GM10248 (cell line): ENCODE measurements at regions of chr14 and their contacts with region 1.

Region 1: DNA sequence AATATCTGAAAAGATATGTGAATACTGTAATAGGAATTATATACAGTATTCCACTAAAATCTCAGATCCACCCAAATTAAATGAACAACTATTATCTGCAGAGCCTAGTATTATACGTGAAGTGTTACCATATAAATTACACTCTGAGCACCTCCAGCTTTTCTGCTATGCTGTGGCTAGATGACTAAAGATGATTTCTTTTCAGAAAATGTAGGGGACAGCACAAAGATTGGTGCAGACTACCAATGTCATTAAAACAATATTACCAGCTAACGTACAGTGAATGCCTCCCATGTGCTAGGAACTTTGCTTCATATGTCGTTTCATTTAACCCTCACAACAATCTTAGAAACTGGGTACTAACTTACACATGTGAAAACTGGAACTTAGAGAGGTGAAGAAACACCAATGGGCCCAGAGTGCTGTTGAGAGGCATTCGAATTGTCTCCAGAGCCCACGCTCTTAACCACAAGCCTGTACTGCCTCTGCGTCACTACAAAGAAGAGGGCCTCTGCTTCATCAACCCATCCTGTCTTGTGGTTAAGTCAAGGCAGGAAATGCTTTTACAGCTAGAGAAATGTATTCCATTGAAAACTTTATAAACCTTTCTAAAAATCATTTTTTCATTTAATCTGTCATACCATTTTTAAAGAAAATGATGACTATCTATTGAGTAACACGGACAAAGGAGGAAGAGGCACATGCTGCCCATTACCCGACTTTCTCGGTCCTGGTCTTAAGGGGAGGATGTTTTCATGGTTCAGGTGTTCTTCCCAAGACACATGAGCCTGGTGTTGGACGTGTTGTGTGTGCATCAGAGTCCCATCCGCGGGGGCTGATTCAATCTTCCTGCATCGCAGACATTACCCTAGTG is 1.3 kb downstream of the GPR65 start:
- DNase-seq: peak; percentile 37
- CTCF ChIP-seq: no peak

Region 2: DNA sequence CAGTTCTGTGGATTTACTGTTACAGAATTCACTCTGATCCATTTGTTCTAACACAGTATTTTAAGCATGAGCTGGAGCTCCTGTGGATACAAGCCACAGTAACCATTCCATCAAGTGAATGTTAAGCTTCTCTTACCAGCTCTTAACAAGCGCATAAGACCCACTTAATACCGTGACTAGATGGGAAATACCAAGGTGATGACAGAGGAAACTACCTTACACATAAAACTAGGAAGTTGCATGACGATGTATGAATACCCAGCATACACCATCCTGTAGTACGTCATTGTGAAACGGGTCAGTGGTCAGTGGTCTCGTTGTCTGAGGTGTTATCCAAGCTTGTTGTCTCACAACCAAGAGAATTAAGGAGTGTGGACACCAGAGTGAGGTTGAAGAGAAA is 11.2 kb before region 1 on chr14:
- CTCF ChIA-PET with region 1: interaction called, 10 read pairs
- POLR2A ChIA-PET with region 1: interaction called, 6 read pairs
- DNase-seq: peak; percentile 28
- CTCF ChIP-seq: no peak